Caco-2 (cell line): ENCODE measurements at regions of chr17 and their contacts with region 1.

Region 1: GRCh38 chr17:76791053-76791980 is 53.4 kb downstream of the MFSD11 start:
- DNase-seq: no peak
- H3K4me3 ChIP-seq: no peak overlapping the region
- H3K4me3 Mint-ChIP-seq: no peak overlapping the region
- H3K27ac Mint-ChIP-seq: no peak overlapping the region
- H3K4me1 ChIP-seq: peaks cover 19% of the 10 kb centered on the region
- H3K4me1 Mint-ChIP-seq: peaks cover 19% of the 10 kb centered on the region
- H3K27me3 ChIP-seq: no peaks in the 10 kb centered on the region
- H3K27me3 Mint-ChIP-seq: no peaks in the 10 kb centered on the region
- CTCF ChIP-seq: no peak

Region 2: GRCh38 chr17:76834870-76835269 is 43.6 kb after region 1 on chr17:
- CTCF ChIA-PET with region 1: no interaction called
- POLR2A ChIA-PET with region 1: no interaction called
- intact Hi-C with region 1: loop called (anchors 5 kb)
- DNase-seq: no peak
- H3K4me3 ChIP-seq: no peak overlapping the region
- H3K4me3 Mint-ChIP-seq: no peak overlapping the region
- H3K27ac Mint-ChIP-seq: no peak overlapping the region
- H3K4me1 ChIP-seq: no peaks in the 10 kb centered on the region
- H3K4me1 Mint-ChIP-seq: no peaks in the 10 kb centered on the region
- H3K27me3 ChIP-seq: no peaks in the 10 kb centered on the region
- H3K27me3 Mint-ChIP-seq: no peaks in the 10 kb centered on the region
- CTCF ChIP-seq: no peak